ENCODE measurements at regions of chr16 and their contacts with region 1.

Region 1: GRCh38 chr16:19179546-19180490 is 11.8 kb downstream of the SYT17 start:
- DNase-seq: peak in 1 of 2 experiments; percentile 77
- H3K4me3 ChIP-seq: no peak overlapping the region
- H3K27ac ChIP-seq: no peak overlapping the region
- H3K4me1 ChIP-seq: peaks cover 0 to under 1% (median 0%) of the 10 kb centered on the region in 4 experiments; a peak in 1 of 7 replicates
- H3K27me3 ChIP-seq: no peaks in the 10 kb centered on the region
- CTCF ChIP-seq: peak; percentile 75 to 82 (median 79)
- EP300 ChIP-seq: no peak
- POLR2A ChIP-seq: no peak
- RAD21 ChIP-seq: peak; percentile 51 to 68

Region 2: DNA sequence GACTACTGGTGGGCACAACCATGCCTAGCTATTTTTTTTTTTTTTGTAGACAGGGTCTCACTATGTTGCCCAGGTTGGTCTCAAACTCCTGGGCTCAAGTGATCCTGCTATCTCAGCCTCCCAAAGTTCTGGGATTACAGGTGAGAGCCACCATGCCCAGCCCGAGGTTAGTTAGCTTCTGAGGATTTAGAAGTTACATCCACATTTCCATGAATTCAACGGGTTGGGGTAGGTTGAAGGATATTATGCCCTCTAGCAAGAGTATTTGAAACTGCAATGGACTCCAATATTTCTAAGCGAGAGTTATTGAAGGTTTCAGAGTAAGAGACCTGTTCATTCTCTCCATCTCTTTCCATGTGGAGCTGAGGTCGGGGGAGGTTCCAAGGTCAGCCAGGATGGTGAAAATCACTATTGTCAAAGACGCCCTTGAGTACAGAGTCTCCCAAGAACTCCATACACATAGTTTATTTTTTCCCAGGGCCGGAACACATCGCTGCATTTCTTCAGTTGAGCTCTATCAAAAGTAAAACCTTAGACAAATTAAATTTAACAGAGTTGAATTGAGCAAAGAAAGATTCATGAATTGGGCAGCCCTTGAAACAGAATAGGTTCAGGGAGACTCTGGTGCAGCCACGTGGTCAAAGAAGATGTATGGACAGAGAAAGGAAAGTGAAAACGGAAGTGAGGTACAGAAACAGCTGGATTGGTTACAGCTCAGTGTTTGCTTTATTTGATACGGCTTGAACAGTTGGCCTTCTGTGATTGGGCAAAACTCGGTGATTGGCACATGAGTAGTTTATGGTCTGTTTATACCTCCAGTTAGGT is 85.1 kb before region 1 on chr16:
- CTCF ChIA-PET with region 1: interaction called, 15 read pairs
- POLR2A ChIA-PET with region 1: no interaction called
- DNase-seq: no peak
- H3K4me3 ChIP-seq: no peak overlapping the region
- H3K27ac ChIP-seq: no peak overlapping the region
- H3K4me1 ChIP-seq: no peaks in the 10 kb centered on the region
- H3K27me3 ChIP-seq: no peaks in the 10 kb centered on the region; a peak in 1 of 7 replicates
- CTCF ChIP-seq: peak in 1 of 3 experiments; percentile 11; a peak in 1 of 4 replicates
- EP300 ChIP-seq: no peak
- POLR2A ChIP-seq: no peak
- RAD21 ChIP-seq: no peak

Region 3: DNA sequence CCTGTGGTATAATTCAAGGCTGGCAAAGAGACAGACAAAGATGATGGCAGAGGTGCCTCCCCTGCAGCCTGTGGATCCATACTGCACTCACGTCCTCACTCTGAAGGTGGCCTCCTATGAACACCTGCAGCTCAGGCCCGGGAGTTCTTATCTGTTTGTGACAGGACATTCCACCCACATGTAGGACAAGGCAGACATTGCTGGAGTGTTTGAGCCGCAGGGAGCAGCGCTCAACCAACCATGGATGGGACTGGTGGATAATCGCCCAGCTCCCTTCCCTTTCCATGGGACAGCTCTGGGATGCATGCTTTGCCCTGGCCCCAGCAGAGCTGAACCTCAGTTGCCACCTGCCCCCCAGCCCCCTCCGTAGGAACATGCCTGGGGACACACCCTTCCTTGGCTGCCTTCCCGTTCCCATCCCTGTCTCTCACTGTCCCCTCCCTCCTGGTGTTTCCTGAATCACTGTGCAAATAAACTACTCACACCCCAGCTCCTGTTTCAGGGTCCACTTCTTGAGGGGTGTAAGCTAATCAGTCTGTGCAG is 43.9 kb before region 1 on chr16:
- CTCF ChIA-PET with region 1: interaction called, 11 read pairs
- POLR2A ChIA-PET with region 1: no interaction called
- DNase-seq: no peak
- H3K4me3 ChIP-seq: no peak overlapping the region
- H3K27ac ChIP-seq: no peak overlapping the region
- H3K4me1 ChIP-seq: peaks cover 0 to 4% (median 2%) of the 10 kb centered on the region in 4 experiments; a peak in 5 of 7 replicates
- H3K27me3 ChIP-seq: no peaks in the 10 kb centered on the region
- CTCF ChIP-seq: no peak
- EP300 ChIP-seq: no peak
- POLR2A ChIP-seq: no peak
- RAD21 ChIP-seq: no peak

Region 4: GRCh38 chr16:19168371-19169081 is 11.3 kb before region 1 on chr16:
- CTCF ChIA-PET with region 1: interaction called, 24 read pairs
- POLR2A ChIA-PET with region 1: interaction called, 4 read pairs
- DNase-seq: peak in 1 of 2 experiments; percentile 66
- H3K4me3 ChIP-seq: peak overlapping the region; percentile 62 to 82 (median 74)
- H3K27ac ChIP-seq: no peak overlapping the region
- H3K4me1 ChIP-seq: peaks cover 0 to 2% (median 2%) of the 10 kb centered on the region in 4 experiments; a peak in 3 of 7 replicates
- H3K27me3 ChIP-seq: peaks cover 0 to 21% (median 15%) of the 10 kb centered on the region in 4 experiments; a peak in 5 of 7 replicates
- CTCF ChIP-seq: no peak
- EP300 ChIP-seq: no peak
- POLR2A ChIP-seq: no peak
- RAD21 ChIP-seq: no peak

Region 5: GRCh38 chr16:19213890-19214289 is 34.1 kb after region 1 on chr16:
- CTCF ChIA-PET with region 1: interaction called, 11 read pairs
- POLR2A ChIA-PET with region 1: no interaction called
- DNase-seq: no peak
- H3K4me3 ChIP-seq: no peak overlapping the region
- H3K27ac ChIP-seq: no peak overlapping the region
- H3K4me1 ChIP-seq: peaks cover 0 to 5% (median 0%) of the 10 kb centered on the region in 4 experiments; a peak in 3 of 7 replicates
- H3K27me3 ChIP-seq: no peaks in the 10 kb centered on the region
- CTCF ChIP-seq: peak in 2 of 3 experiments; percentile 45 to 60; a peak in 3 of 4 replicates
- EP300 ChIP-seq: no peak
- POLR2A ChIP-seq: no peak
- RAD21 ChIP-seq: peak; percentile 42 to 63

Region 6: GRCh38 chr16:19375561-19376158 is 195.8 kb after region 1 on chr16:
- CTCF ChIA-PET with region 1: interaction called, 11 read pairs
- POLR2A ChIA-PET with region 1: no interaction called
- DNase-seq: peak in 1 of 2 experiments; percentile 2
- H3K4me3 ChIP-seq: no peak overlapping the region
- H3K27ac ChIP-seq: no peak overlapping the region
- H3K4me1 ChIP-seq: no peaks in the 10 kb centered on the region
- H3K27me3 ChIP-seq: no peaks in the 10 kb centered on the region
- CTCF ChIP-seq: peak; percentile 40 to 89 (median 77)
- EP300 ChIP-seq: no peak
- POLR2A ChIP-seq: no peak
- RAD21 ChIP-seq: peak; percentile 98 to 99